ENCODE measurements at regions of chr2 and their contacts with region 1.

Region 1: DNA sequence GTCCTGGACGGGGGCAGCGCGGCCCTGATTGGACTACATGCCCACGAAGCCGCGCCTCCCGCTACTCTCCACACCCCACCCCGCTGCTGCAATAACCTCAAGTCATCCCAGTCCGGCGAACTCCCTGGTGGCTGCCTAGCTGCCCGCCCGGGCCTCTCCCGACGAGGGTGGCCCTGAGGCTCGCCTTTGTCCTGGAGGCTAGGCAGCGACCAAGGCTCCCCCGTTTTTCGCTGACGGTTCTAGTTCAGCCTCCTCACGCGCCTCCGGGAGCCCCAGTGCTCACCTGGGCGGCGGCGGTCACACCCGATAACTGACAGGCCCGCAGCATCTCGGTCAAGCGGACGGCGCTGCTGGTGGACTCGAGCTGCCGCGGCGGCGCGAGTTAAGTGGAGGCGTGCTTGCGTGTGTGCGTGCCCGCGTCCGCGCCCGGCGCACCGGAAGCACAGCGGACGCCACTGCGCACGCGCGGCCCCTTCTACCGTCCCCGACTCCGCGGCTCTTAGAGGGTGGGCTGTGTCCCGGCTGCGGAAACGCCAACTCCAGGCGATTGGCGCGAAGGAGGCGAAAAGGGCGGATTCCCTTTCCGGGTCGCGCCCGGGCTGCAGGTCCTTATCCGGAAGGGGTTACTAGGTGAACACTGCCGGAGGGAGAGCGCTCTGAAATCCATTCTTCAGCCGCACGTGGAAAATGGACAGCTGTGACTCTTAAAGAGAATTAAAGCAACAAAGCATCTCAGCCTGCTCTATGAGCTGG is at the start of gene IMMT:
- DNase-seq: peak; percentile 96
- H3K4me3 Mint-ChIP-seq: peak within 1 kb of the TSS; percentile 89
- H3K27ac Mint-ChIP-seq: peak within 1 kb of the TSS; percentile 90
- H3K4me1 Mint-ChIP-seq: peaks cover 47% of the 10 kb centered on the region
- H3K27me3 Mint-ChIP-seq: no peaks in the 10 kb centered on the region
- total RNA-seq, gene IMMT: 164 to 168 TPM

Region 2: GRCh38 chr2:85826990-85827878 is 368.0 kb before region 1 on chr2:
- CTCF ChIA-PET with region 1: no interaction called
- intact Hi-C with region 1: loop called (anchors 10 kb)
- DNase-seq: peak; percentile 88
- H3K4me3 Mint-ChIP-seq: peak overlapping the region; percentile 6
- H3K27ac Mint-ChIP-seq: no peak overlapping the region
- H3K4me1 Mint-ChIP-seq: peaks cover 11% of the 10 kb centered on the region
- H3K27me3 Mint-ChIP-seq: no peaks in the 10 kb centered on the region

Region 3: GRCh38 chr2:86105252-86105968 is 89.8 kb before region 1 on chr2 and contains the start of gene POLR1A:
- CTCF ChIA-PET with region 1: no interaction called
- intact Hi-C with region 1: loop called (anchors 1 kb)
- DNase-seq: peak; percentile 87
- H3K4me3 Mint-ChIP-seq: peak within 1 kb of the TSS; percentile 89
- H3K27ac Mint-ChIP-seq: peak within 1 kb of the TSS; percentile 99
- H3K4me1 Mint-ChIP-seq: peaks cover 57% of the 10 kb centered on the region
- H3K27me3 Mint-ChIP-seq: no peaks in the 10 kb centered on the region
- total RNA-seq, gene POLR1A: 25.3 to 27.1 TPM

Region 4: GRCh38 chr2:86213699-86214502 is 18.7 kb after region 1 on chr2:
- CTCF ChIA-PET with region 1: no interaction called
- intact Hi-C with region 1: no loop called
- DNase-seq: no peak
- H3K4me3 Mint-ChIP-seq: no peak overlapping the region
- H3K27ac Mint-ChIP-seq: no peak overlapping the region
- H3K4me1 Mint-ChIP-seq: peaks cover 4% of the 10 kb centered on the region
- H3K27me3 Mint-ChIP-seq: no peaks in the 10 kb centered on the region

Region 5: DNA sequence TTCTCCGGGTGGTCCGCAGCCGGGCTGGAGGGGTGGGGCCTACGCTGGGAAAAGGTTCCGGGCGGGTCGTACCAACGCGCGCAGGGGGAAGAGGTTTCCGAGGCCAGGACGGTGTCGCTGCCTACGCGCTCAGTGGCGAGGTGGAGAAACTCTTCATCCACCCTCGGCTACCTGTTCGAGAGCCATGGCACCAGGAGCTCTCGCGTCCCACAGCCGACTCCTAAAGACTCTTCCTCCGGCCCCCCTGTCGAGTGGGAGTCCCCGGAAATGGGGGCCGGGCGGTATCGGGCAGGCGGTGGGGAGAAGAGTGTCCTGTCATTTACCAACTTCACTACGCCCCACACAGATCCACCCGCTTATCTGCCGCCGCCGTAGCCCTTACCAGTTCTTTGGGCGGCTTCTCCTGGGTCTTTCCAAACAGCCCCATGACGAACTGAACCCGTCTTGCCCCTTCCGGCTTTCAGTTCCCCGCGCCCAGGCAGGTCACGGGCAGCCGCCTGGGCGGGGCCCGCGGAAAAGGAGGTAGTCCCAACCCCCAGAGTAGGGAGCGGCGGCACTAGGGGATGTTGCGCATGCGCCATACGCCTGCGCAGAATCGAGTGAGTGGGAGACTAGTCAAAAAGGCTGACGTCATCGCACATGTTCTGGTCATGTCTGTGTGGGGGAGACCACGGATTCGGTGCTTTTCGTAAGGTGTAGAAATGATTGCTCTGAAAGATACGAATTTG is 367.9 kb after region 1 on chr2 and contains the start of gene CHMP3:
- CTCF ChIA-PET with region 1: no interaction called
- intact Hi-C with region 1: loop called (anchors 10 kb)
- DNase-seq: peak; percentile 97
- H3K4me3 Mint-ChIP-seq: peak within 1 kb of the TSS; percentile 92
- H3K27ac Mint-ChIP-seq: peak within 1 kb of the TSS; percentile 99
- H3K4me1 Mint-ChIP-seq: peaks cover 25% of the 10 kb centered on the region
- H3K27me3 Mint-ChIP-seq: no peaks in the 10 kb centered on the region
- total RNA-seq, gene CHMP3: 27.0 to 29.6 TPM

Region 6: DNA sequence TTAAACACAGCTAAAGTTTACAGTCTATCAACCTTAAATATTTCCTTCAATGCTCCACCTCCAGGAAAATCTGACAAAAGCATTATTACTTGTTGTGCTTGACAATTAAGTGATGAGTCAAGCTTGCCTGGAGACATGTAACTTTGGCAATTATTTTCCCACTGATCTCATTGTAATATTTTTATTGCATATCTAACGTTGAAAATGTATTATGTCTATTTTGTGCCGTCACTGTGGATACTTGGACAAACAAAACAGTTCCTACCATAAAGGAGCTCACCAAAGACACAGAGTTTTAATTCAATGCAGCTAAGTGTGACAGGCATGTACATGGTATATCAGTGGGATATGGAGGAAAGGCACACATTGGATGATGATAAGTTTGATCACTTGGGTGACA is 403.7 kb after region 1 on chr2:
- CTCF ChIA-PET with region 1: no interaction called
- intact Hi-C with region 1: no loop called
- DNase-seq: no peak
- H3K4me3 Mint-ChIP-seq: no peak overlapping the region
- H3K27ac Mint-ChIP-seq: no peak overlapping the region
- H3K4me1 Mint-ChIP-seq: no peaks in the 10 kb centered on the region
- H3K27me3 Mint-ChIP-seq: no peaks in the 10 kb centered on the region